Thyroid gland (tissue), 4 donors: ENCODE measurements at regions of chr2 and their contacts with region 1.

Region 1: DNA sequence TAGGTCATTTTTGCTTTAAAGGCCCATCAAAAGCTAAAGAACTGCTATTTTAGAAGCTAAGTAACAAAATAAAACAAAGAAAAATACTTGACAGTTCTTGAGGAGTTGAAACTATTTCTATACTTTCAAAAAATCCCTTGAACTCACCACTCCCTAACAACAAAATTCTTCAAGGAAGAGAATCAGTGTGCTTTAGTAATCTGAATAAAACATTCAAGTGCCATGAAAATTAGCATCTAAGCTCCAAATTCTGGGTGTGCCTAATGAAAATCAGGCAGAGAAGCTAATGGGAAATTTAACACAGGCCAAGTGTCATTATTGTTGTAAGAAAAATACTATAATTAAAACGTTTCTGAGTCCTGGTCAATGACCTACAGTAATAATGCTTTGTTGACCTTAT is 456.3 kb downstream of the ZEB2 start:
- DNase-seq: no peak
- H3K4me3 ChIP-seq: no peak overlapping the region
- H3K27ac ChIP-seq: no peak overlapping the region
- H3K4me1 ChIP-seq: no peaks in the 10 kb centered on the region
- H3K27me3 ChIP-seq: no peaks in the 10 kb centered on the region
- CTCF ChIP-seq: no peak
- POLR2A ChIP-seq: no peak

Region 2: GRCh38 chr2:144094408-144095151 is 31.0 kb after region 1 on chr2:
- intact Hi-C with region 1: loop called (anchors 2 kb)
- DNase-seq: no peak
- H3K4me3 ChIP-seq: no peak overlapping the region
- H3K27ac ChIP-seq: no peak overlapping the region
- H3K4me1 ChIP-seq: peaks cover 0 to 2% of the 10 kb centered on the region in 2 donors
- H3K27me3 ChIP-seq: no peaks in the 10 kb centered on the region
- CTCF ChIP-seq: no peak
- POLR2A ChIP-seq: no peak

Region 3: DNA sequence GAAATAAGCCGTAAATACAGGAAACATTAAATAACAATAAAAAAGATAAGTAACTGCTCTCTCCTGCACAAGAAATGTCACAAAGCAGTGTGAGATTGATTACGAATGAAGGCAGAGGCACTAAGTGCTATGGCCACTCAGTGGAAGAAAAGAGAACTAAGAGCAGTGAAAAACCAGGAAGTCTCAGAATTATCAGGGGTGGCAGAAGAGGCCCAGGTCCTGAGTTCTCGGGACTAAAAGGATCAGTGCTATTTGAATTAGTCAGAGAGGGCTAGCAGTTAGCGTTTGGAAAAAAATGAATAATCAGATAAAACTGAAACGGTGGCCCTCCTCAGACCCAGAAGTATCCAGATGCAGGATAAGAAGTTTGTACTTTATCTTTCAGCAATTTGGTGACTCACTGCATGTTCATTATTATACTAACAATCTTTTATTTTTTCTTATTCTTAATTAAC is 89.2 kb after region 1 on chr2:
- intact Hi-C with region 1: no loop called
- DNase-seq: no peak
- H3K4me3 ChIP-seq: no peak overlapping the region
- H3K27ac ChIP-seq: no peak overlapping the region
- H3K4me1 ChIP-seq: no peaks in the 10 kb centered on the region
- H3K27me3 ChIP-seq: no peaks in the 10 kb centered on the region
- CTCF ChIP-seq: no peak
- POLR2A ChIP-seq: no peak